Activated T-helper 2 cell treated with anti-CD3 and anti-CD28 coated beads, Interferon-gamma antibody, Interleukin-2, Interleukin-4, amounts not matched to agents 10 μg/mL and 5 μg/mL and 100 μg/mL, durations not matched to agents 14 hours and 24 hours and 36 hours (primary cell): ENCODE measurements at regions of chr5 and their contacts with region 1.

Region 1: DNA sequence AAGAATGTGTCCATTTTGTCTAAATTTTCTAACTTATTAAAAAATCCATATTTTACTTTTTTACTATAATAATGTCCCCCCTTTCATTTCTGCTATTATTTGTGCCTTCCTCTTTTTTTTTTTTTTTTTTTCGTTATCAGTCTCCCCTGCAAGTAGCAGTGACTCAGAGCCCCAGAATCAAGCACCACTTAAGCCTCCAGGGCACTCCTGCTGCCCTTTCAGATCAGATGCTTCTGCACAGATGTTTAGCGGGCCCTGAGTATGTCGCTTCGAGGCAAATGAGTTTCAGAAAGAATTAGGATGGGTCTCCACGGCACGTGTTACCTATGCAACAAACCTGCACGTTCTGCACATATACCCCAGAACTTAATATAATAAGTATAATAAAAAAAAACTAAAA is 11.7 kb downstream of the MED7 start:
- DNase-seq: no peak
- H3K4me3 Mint-ChIP-seq: no peak overlapping the region
- H3K27ac Mint-ChIP-seq: no peak overlapping the region
- H3K4me1 Mint-ChIP-seq: peaks cover 32% of the 10 kb centered on the region
- H3K27me3 Mint-ChIP-seq: no peaks in the 10 kb centered on the region

Region 2: DNA sequence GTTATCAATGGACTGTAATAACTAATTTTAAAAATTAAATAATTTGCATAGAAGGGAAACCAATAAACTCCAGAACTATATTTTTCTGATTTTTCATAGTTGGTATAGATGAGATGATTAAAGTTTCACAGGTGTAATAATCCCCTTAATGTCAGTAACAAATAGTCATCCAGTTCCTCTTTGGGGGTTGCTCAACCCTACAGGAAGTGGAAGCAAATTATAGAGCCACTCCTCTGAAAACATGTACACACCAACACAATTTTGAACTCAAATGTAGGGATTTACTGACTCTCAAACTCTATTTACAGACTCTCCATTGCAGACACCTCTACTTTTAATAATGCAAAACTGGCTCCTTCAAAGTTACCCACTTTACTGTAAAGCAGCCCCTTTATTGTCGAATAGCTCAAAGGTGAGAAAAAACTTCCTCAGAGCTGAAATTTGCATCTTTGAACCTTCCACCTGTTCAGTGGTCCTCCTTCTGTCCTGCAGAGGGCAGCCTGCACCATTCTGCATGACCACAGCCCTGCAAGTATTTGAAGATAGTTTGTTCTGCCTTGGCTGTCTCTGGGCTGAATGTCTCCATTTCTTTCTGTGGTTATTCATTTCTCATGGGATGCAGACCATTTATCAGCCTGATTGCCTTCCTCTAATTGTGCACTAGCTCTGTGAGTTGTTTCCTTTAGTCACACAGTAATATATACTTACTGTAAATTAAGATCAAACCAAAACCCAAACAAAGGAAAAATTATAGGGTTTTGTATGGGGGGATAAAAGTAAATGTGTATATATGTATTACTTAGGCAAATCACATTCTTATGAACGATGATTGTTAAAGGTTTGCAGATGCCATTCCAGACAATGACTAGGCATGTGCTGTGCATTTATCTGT is 1187.2 kb before region 1 on chr5:
- intact Hi-C with region 1: loop called (anchors 5 kb)
- DNase-seq: no peak
- H3K4me3 Mint-ChIP-seq: no peak overlapping the region
- H3K27ac Mint-ChIP-seq: no peak overlapping the region
- H3K4me1 Mint-ChIP-seq: peaks cover 5% of the 10 kb centered on the region
- H3K27me3 Mint-ChIP-seq: peaks cover 1% of the 10 kb centered on the region

Region 3: GRCh38 chr5:156595132-156595787 is 535.7 kb before region 1 on chr5:
- intact Hi-C with region 1: loop called (anchors 5 kb)
- DNase-seq: no peak
- H3K4me3 Mint-ChIP-seq: no peak overlapping the region
- H3K27ac Mint-ChIP-seq: no peak overlapping the region
- H3K4me1 Mint-ChIP-seq: no peaks in the 10 kb centered on the region
- H3K27me3 Mint-ChIP-seq: peaks cover 9% of the 10 kb centered on the region

Region 4: DNA sequence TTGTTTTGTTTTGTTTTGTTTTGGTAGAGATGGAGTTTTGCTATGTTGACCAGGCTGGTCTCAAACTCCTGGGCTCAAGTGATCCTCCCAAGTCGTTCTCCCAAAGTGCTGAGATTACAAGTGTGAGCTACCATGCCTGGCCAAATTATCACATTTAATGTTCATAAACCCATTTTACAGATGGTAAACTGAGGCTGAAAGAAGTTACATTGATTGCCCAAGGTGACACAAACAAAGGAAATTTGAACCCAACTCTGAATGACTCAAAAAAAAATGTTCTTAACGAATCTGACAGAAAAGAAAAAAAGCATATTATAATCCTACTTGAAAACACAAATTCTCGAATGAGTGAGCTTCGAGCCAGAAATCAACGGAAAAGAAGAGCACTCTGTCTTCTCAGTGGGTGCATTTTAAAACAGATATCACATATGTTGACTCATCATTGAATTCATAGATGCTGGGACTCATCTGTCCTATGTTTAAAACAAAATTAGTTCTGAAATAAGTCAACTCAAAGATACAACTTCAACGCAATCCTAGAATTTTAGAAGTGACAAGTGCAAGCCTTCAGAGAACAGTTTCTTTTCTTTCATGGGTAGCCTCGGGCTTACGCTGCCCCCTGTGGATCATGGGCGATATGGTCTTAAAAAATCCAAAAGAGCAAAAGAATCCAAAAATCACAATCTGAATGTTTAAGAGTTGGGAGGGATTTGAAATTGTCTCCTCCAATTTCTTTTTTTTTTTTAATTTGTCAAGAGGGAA is 196.3 kb before region 1 on chr5:
- intact Hi-C with region 1: loop called (anchors 2 kb)
- DNase-seq: peak; percentile 42
- H3K4me3 Mint-ChIP-seq: no peak overlapping the region
- H3K27ac Mint-ChIP-seq: peak overlapping the region; percentile 81
- H3K4me1 Mint-ChIP-seq: peaks cover 45% of the 10 kb centered on the region
- H3K27me3 Mint-ChIP-seq: no peaks in the 10 kb centered on the region

Region 5: DNA sequence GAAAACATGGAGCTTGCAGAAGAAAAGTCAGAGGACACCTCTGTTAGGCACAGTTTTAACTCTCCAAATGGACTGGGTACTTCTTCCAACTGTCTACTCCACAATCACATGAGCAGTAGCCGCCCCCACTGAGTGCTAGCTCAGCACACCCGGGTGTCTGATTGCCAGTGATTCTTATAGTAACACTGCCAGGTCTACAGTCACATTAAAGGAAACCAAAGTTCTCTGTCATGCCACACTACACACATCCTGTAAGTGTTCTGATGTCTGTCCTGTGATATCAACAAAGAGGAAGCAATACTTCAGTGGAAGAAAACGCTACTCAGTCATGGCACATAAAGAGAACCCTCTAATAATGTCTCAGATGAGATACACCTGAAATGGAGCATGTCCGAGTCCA is 21.9 kb before region 1 on chr5 and contains the start of gene HAVCR2:
- intact Hi-C with region 1: loop called (anchors 2 kb)
- DNase-seq: peak; percentile 63
- H3K4me3 Mint-ChIP-seq: peak within 1 kb of the TSS; percentile 88
- H3K27ac Mint-ChIP-seq: peak within 1 kb of the TSS; percentile 99
- H3K4me1 Mint-ChIP-seq: peaks cover 57% of the 10 kb centered on the region
- H3K27me3 Mint-ChIP-seq: no peaks in the 10 kb centered on the region
- total RNA-seq, gene HAVCR2: 48.6 and 50.5 TPM in 2 replicates

Region 6: DNA sequence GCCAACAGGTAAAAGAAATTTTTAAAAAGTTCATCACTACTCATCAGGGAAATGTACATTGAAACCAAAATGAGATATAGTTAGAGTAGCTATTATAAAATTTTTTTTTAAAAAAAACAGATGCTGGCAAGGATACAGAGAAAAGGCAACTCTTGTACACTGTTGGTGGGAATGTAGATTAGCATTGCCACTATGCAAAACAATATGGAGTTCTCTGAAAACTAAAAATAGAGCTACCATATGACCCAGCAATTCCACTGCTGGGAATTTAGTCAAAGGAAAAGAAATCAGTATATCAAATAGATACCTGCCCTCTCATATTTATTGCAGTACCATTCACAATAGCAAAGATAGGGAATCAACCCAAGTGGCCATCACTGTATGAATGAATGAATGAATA is 284.9 kb after region 1 on chr5:
- intact Hi-C with region 1: no loop called
- DNase-seq: no peak
- H3K4me3 Mint-ChIP-seq: no peak overlapping the region
- H3K27ac Mint-ChIP-seq: no peak overlapping the region
- H3K4me1 Mint-ChIP-seq: no peaks in the 10 kb centered on the region
- H3K27me3 Mint-ChIP-seq: peaks cover 38% of the 10 kb centered on the region